ENCODE measurements at regions of chr11 and their contacts with region 1.

Region 1: GRCh38 chr11:57741132-57742086 is at the start of gene SELENOH:
- DNase-seq: peak; percentile 98
- ATAC-seq: peak; percentile 91
- H3K4me3 Mint-ChIP-seq: peak within 1 kb of the TSS; percentile 100
- H3K27ac Mint-ChIP-seq: peak within 1 kb of the TSS; percentile 99
- H3K4me1 Mint-ChIP-seq: peaks cover 47% of the 10 kb centered on the region
- H3K27me3 Mint-ChIP-seq: no peaks in the 10 kb centered on the region
- total RNA-seq, gene SELENOH: 204 to 210 TPM

Region 2: GRCh38 chr11:57584341-57584740 is 157.1 kb before region 1 on chr11:
- CTCF ChIA-PET with region 1: no interaction called
- POLR2A ChIA-PET with region 1: no interaction called
- DNase-seq: no peak
- ATAC-seq: no peak
- H3K4me3 Mint-ChIP-seq: no peak overlapping the region
- H3K27ac Mint-ChIP-seq: no peak overlapping the region
- H3K4me1 Mint-ChIP-seq: peaks cover 10% of the 10 kb centered on the region
- H3K27me3 Mint-ChIP-seq: no peaks in the 10 kb centered on the region

Region 3: GRCh38 chr11:57667736-57668435 is 73.5 kb before region 1 on chr11 and contains the start of gene ZDHHC5:
- CTCF ChIA-PET with region 1: interaction called, 5 read pairs
- POLR2A ChIA-PET with region 1: interaction called, 12 read pairs
- DNase-seq: peak; percentile 100
- ATAC-seq: peak; percentile 92
- H3K4me3 Mint-ChIP-seq: peak within 1 kb of the TSS; percentile 96
- H3K27ac Mint-ChIP-seq: peak within 1 kb of the TSS; percentile 99
- H3K4me1 Mint-ChIP-seq: peaks cover 45% of the 10 kb centered on the region
- H3K27me3 Mint-ChIP-seq: no peaks in the 10 kb centered on the region
- total RNA-seq, gene ZDHHC5: 77.8 to 82.4 TPM

Region 4: GRCh38 chr11:57712256-57713150 is 28.9 kb before region 1 on chr11 and contains the start of gene TMX2:
- CTCF ChIA-PET with region 1: interaction called, 5 read pairs
- POLR2A ChIA-PET with region 1: interaction called, 17 read pairs
- DNase-seq: peak; percentile 95
- ATAC-seq: peak; percentile 96
- H3K4me3 Mint-ChIP-seq: peak within 1 kb of the TSS; percentile 100
- H3K27ac Mint-ChIP-seq: peak within 1 kb of the TSS; percentile 100
- H3K4me1 Mint-ChIP-seq: peaks cover 41% of the 10 kb centered on the region
- H3K27me3 Mint-ChIP-seq: no peaks in the 10 kb centered on the region
- total RNA-seq, gene TMX2: 65.0 to 68.7 TPM

Region 5: DNA sequence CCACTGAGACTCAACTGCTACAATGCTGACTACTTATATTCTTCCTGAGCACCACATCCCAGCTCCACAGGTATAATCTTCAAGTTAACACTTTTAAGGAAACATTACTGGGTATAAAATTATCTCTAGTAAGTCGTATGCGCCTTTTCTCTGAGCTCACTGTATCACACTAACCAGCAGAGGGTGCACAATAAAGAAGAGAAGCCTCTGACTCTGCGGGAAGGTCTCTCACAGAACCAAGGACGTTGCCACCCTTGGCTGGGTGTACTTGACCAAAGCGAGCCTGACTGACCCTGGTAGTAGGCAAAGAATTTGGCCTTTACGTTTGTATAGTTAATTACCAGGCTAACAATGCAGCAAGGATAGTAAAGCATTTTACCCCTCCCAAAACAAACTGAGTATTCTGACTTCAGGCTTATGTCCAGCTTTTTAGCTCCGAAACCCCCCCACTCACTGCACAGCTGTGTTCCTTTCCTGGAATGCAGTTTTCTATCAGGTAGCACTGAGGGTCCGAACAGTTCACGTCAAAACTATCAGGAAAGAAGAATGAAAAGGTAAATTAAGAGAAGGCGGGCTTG is 10.4 kb after region 1 on chr11 and contains the start of gene BTBD18:
- CTCF ChIA-PET with region 1: interaction called, 12 read pairs
- POLR2A ChIA-PET with region 1: interaction called, 4 read pairs
- DNase-seq: no peak
- ATAC-seq: peak; percentile 41
- H3K4me3 Mint-ChIP-seq: no peak within 1 kb of the TSS
- H3K27ac Mint-ChIP-seq: no peak within 1 kb of the TSS
- H3K4me1 Mint-ChIP-seq: peaks cover 21% of the 10 kb centered on the region
- H3K27me3 Mint-ChIP-seq: no peaks in the 10 kb centered on the region
- total RNA-seq, gene BTBD18: not detected

Region 6: DNA sequence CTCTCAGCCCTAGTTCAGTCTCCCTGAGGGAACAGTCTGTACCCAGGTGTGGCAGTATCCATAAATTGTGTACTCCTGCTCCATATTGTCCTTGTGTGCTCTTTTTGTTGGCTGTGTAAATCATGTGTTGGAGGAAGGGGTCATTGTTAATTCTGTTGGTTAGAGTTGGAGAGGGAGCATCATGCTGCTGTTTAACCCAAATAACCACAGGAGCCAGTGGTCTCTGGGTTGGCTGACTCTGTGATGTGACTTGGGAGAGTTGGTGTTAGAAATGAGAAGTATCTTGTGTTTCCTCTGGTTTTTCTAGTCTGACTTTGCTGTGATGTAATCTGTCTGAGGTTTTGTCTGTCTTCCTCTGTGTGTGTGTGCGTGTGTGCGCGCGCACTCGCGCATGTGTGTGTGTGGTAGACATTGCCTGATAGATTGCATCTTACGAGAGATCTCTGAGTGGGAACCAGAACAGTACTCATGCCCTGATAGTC is 50.7 kb after region 1 on chr11:
- CTCF ChIA-PET with region 1: interaction called, 3 read pairs
- POLR2A ChIA-PET with region 1: interaction called, 46 read pairs
- DNase-seq: peak; percentile 91
- ATAC-seq: peak; percentile 93
- H3K4me3 Mint-ChIP-seq: peak overlapping the region; percentile 52
- H3K27ac Mint-ChIP-seq: peak overlapping the region; percentile 96
- H3K4me1 Mint-ChIP-seq: peaks cover 65% of the 10 kb centered on the region
- H3K27me3 Mint-ChIP-seq: no peaks in the 10 kb centered on the region